Posterior cingulate gyrus (tissue), 11 donors: ENCODE measurements at regions of chr1 and their contacts with region 1.

Region 1: DNA sequence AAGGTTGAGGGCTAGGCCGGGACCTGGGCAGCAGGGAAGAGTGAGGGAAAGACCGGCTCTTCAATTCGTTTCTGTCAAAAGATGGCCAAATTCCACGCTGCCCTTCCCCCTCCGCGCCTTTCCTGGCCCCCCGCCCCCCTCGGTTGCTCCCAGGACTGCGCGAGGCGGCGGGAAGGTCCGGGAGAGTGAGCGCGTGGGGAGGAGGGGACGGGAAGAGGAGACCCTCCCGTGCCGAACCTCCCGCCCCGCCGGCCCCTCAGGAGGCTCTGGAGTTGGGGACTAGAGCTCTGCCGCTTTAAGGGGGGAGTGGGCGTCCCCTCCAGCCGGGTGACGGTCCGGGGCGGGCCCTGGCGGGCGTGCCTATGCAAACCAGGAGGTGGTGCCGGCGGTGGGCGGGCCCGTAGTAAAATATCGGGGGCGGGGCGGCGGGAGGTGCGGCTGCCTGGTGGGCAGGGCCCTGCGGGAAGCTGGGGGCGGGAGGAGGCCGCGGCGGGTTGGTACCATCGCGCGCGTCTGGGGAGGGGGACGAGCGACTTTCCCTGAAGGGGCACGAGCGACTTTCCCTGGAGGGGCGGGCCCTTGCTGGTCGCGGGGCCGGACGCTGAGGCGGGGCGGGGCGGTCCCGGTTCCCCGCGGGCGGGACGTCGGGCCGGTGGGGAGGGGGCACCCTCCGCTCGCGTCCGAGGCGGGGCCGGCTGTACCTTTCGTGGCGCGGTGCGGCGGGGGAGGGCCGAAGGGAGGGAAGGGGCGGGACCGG is 58.2 kb downstream of the BCL9 start:
- DNase-seq: peak; percentile 93 to 100 (median 97)

Region 2: GRCh38 chr1:147264158-147264768 is 335.3 kb before region 1 on chr1:
- intact Hi-C with region 1: loop called (anchors 10 kb)
- DNase-seq: no peak

Region 3: GRCh38 chr1:147545133-147545532 is 54.4 kb before region 1 on chr1:
- intact Hi-C with region 1: loop called (anchors 1 kb)
- DNase-seq: peak in 4 of 10 donors; percentile 6 to 84 (median 42)